ENCODE measurements at regions of chr1 and their contacts with region 1.

Region 1: DNA sequence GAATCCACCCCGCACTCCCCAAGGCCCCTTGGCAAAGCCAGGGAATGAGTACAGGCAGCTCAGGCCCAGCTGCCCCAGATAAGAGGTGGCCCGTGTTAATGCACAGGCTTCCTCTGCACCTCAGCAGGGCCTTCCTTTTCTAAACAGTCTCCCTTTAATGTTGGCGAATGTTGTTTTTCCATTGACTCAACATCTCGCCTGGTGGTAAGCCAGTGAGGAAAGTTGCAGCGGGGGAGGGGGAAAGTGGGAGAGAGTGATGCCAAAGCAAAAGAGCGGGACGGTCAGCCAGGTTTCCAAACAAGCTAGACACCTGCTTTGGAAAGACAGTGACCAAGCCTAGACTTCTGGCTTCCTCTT is 10.3 kb upstream of the PROX1 start:
- DNase-seq: no peak
- H3K4me3 ChIP-seq: peak overlapping the region in 1 of 4 experiments; percentile 26; a peak in 1 of 8 replicates
- H3K27ac ChIP-seq: no peak overlapping the region
- H3K4me1 ChIP-seq: peaks cover 1 to 15% (median 8%) of the 10 kb centered on the region in 4 experiments; a peak in 6 of 7 replicates
- H3K27me3 ChIP-seq: peaks cover 32 to 63% (median 58%) of the 10 kb centered on the region in 4 experiments
- CTCF ChIP-seq: no peak
- EP300 ChIP-seq: no peak
- POLR2A ChIP-seq: no peak
- RAD21 ChIP-seq: 0 out of 4 replicates have a peak, but pooled peaks of 1 of the 2 experiments have one; percentile 6

Region 2: GRCh38 chr1:213840575-213840974 is 136.9 kb before region 1 on chr1:
- CTCF ChIA-PET with region 1: no interaction called
- POLR2A ChIA-PET with region 1: no interaction called
- DNase-seq: no peak
- H3K4me3 ChIP-seq: no peak overlapping the region
- H3K27ac ChIP-seq: no peak overlapping the region
- H3K4me1 ChIP-seq: no peaks in the 10 kb centered on the region
- H3K27me3 ChIP-seq: no peaks in the 10 kb centered on the region; a peak in 1 of 7 replicates
- CTCF ChIP-seq: no peak
- EP300 ChIP-seq: no peak
- POLR2A ChIP-seq: no peak
- RAD21 ChIP-seq: no peak

Region 3: DNA sequence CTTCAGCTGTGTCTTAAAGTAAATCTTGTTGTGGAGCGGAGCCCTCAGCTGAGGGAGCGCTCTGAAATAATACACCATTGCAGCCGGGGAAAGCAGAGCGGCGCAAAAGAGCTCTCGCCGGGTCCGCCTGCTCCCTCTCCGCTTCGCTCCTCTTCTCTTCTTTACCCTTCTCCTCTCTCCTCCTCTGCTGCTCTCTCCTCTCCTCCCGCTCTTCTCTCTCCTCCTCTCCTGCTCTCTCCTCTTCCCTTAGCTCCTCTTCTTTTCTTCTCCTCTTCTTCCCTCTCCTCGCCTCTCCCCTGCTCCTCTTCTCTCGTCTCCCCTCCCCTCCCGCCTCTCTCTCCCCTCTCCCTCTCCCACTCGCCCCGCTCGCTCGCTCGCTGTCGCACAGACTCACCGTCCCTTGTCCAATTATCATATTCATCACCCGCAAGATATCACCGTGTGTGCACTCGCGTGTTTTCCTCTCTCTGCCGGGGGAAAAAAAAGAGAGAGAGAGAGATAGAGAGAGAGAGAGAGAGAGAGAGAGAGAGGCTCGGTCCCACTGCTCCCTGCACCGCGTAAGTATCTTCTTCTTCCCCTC is 10.6 kb after region 1 on chr1 and contains the start of gene PROX1:
- CTCF ChIA-PET with region 1: interaction called, 5 read pairs
- POLR2A ChIA-PET with region 1: interaction called, 13 read pairs
- DNase-seq: no peak
- H3K4me3 ChIP-seq: peak within 1 kb of the TSS; percentile 55 to 85 (median 69)
- H3K27ac ChIP-seq: no peak within 1 kb of the TSS; the same call in 1 of the 2 replicates
- H3K4me1 ChIP-seq: peaks cover 21 to 42% (median 27%) of the 10 kb centered on the region in 4 experiments
- H3K27me3 ChIP-seq: peaks cover 32 to 66% (median 61%) of the 10 kb centered on the region in 4 experiments
- CTCF ChIP-seq: no peak
- EP300 ChIP-seq: no peak
- POLR2A ChIP-seq: peak in 1 of 2 experiments; percentile 52; a peak in 1 of 3 replicates
- RAD21 ChIP-seq: no peak; a peak in 1 of 4 replicates
- total RNA-seq, gene PROX1: 1.5 and 2.0 TPM in 2 replicates

Region 4: GRCh38 chr1:214044438-214045214 is 67.2 kb after region 1 on chr1:
- CTCF ChIA-PET with region 1: no interaction called
- POLR2A ChIA-PET with region 1: no interaction called
- DNase-seq: no peak
- H3K4me3 ChIP-seq: no peak overlapping the region
- H3K27ac ChIP-seq: no peak overlapping the region
- H3K4me1 ChIP-seq: peaks cover 0 to 6% (median under 1%) of the 10 kb centered on the region in 4 experiments; a peak in 2 of 7 replicates
- H3K27me3 ChIP-seq: no peaks in the 10 kb centered on the region
- CTCF ChIP-seq: no peak
- EP300 ChIP-seq: no peak
- POLR2A ChIP-seq: no peak
- RAD21 ChIP-seq: no peak